PC-3 (cell line): ENCODE measurements at regions of chr2 and their contacts with region 1.

Region 1: GRCh38 chr2:136378712-136379595 is 261.0 kb upstream of the CXCR4 start:
- DNase-seq: peak; percentile 61
- ATAC-seq: peak; percentile 81
- H3K4me3 ChIP-seq: no peak overlapping the region
- H3K27ac ChIP-seq: no peak overlapping the region
- H3K4me1 ChIP-seq: no peaks in the 10 kb centered on the region
- H3K27me3 ChIP-seq: peaks cover 3% of the 10 kb centered on the region; the same call in 1 of the 2 replicates
- CTCF ChIP-seq: peak; percentile 83

Region 2: DNA sequence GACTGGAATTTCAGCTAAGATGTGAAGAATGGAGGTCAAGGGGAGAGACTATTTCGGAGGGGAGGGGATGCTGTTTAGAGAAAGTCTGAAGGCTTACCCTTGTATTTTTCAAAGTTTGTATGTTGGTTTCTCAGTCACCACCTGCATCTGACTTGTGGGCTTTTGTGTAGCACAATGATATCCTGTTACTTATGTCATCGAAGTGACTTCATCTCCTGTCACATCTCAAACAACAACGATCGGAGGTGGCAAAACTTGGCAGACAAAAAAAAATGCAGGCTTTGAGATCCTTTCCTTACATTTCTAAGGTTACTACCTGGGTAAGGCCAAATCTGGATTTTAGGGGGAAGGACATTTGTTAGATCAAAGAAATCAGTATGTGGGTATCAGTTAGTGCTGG is 249.4 kb before region 1 on chr2:
- CTCF ChIA-PET with region 1: no interaction called
- POLR2A ChIA-PET with region 1: no interaction called
- intact Hi-C with region 1: loop called (anchors 10 kb)
- DNase-seq: peak; percentile 39
- ATAC-seq: peak; percentile 18; the same call in 1 of the 2 replicates
- H3K4me3 ChIP-seq: no peak overlapping the region
- H3K27ac ChIP-seq: no peak overlapping the region
- H3K4me1 ChIP-seq: peaks cover 14% of the 10 kb centered on the region; the same call in 1 of the 2 replicates
- H3K27me3 ChIP-seq: peaks cover 30% of the 10 kb centered on the region
- CTCF ChIP-seq: no peak